Head of caudate nucleus (tissue), 42 donors: ENCODE measurements at regions of chr18 and their contacts with region 1.

Region 1: GRCh38 chr18:48951448-48952286 is 902 bp upstream of the SMAD7 start:
- DNase-seq: peak; percentile 64 to 92 (median 84)

Region 2: GRCh38 chr18:48834413-48835031 is 117.1 kb before region 1 on chr18:
- intact Hi-C with region 1: no loop called
- DNase-seq: peak in 21 of 42 donors; percentile 3 to 70 (median 45)

Region 3: GRCh38 chr18:48859311-48860268 is 92.1 kb before region 1 on chr18:
- intact Hi-C with region 1: loop called (anchors 2 kb)
- DNase-seq: peak; percentile 79 to 96 (median 91)

Region 4: DNA sequence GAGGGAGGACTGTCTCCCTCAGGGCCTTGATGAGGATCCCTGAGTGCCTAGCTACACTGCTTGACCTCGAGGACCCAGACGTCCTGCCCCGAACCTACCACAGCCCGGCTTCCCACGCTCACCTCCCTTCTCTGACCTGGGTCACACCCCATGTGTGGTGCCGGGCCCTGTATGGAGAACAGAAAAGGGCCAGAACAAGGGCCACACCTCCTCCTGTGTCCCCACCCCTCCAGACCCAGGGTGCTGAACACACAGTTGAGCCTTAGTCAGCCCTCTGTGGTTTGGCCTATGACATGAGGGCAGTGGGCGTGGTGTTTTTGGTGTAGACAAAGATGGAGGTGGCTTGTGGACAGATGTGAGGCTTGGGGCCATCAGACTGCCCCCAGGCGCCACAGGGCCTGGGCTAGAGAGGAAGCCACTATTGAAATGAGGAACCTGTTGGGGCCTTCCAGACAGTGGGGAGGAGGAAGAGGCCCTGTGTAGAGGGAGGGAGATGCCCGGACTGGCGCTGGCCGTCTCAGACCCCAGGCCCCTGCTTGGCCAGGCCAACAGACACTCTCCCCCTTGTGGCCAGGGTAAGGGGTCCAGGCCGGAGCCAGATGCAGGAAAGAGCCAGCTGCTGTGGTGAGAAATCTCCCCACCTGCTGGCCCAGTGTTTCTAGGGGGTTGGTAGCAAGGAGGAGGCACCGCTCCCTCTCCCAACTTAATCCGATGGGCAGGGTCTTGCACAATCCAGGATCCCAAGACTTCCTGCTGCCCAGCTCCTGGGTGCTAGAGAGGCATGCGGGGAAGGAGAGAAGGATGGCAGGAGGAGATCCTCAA is 54.8 kb before region 1 on chr18:
- intact Hi-C with region 1: no loop called
- DNase-seq: peak in 32 of 42 donors; percentile 21 to 78 (median 56)

Region 5: DNA sequence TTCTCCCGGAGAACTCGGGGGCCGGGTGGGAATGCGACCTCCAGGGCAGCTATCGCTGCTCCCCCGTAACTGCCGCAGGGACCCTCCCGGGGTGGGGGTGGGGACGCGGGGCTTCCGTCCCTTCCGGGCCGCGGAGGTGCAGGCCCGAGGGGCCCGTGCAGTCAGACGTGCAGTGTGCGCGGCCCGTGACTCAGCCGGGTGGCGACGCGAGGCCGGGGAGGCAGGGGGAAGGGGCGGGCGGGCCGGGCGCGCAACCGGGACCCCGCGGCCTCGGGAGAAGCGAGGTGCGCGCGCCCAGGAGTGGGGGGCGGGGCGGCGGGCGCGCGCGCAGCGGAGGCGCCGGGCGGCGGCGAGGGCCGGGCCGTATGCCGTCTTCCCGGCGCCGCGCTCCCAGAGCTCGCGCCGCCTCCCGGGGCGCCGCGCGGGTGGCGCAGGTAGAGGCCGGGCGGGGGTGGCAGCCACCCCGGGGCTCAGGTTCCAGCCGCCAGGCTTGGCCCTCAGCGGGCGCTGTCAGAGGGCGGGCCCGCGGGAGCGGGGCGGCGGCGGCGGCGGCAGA is 24.1 kb after region 1 on chr18:
- intact Hi-C with region 1: loop called (anchors 2 kb)
- DNase-seq: peak in 34 of 42 donors; percentile 5 to 65 (median 36)

Region 6: DNA sequence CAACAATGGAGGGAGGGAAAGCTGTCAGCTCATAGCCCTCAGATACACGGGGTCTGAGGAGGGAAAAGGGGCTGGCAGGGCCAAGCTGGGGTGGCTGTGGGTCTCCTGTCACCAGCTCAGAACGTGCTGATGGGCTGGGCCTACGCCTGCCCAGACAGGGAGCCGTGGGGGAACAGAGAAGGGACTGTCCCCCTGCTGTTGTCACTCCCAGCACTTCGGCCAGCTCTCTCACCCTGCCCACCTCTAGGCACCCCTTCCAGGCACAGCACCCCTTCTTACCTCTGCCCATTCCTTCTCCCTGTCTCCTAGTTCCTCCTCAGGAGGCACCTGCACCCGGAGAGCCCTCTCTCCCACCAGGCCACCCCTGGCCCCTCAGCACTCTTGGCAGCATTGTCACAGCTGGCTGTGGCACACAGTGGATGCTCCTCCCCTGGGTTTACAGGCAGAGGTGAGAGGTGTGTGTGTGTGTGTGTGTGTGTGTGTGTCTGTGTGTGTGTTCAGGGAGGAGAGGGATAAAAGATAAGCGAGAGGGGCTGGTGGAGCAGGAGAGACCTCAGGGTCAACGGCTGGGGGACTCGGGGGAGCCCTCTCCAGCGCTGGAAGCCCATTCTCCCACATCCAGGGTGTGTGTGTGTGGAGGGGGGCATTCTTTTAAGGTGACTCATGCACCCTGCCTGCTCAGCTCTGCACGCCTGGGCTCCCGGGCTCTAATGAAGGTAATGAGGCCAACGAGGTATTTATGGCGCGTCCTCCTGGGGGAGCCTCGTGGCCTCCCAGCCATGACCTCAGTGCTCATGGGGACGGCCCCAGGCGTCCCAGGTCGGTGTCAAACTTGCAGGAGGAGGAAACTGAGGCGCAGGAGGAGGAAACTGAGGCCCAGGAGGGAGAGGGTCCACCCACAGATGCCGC is 65.2 kb after region 1 on chr18:
- intact Hi-C with region 1: no loop called
- DNase-seq: peak in 16 of 42 donors; percentile 2 to 27 (median 10)

Region 7: DNA sequence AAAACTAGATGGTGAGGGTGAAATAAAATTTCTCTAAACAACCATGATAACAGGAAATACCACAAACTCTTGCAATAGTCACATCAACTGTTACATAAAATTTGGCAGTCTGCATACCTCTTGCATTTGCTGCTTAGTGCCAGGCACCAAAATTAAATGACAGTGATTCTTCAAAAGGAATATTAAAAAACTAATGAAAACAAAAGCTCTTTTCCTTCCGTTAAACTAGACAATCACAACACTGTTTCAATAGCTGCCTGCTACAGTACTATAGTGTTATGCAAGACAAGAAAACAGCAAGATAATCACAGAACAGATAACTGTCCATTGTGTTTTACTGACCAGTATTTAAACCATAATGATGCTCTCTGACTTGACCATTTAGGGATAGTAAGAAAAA is 238.1 kb after region 1 on chr18:
- intact Hi-C with region 1: loop called (anchors 10 kb)
- DNase-seq: peak in 2 of 42 donors; percentile 26 to 36